Posterior vena cava (tissue), 2 donors: ENCODE measurements at regions of chr17 and their contacts with region 1.

Region 1: DNA sequence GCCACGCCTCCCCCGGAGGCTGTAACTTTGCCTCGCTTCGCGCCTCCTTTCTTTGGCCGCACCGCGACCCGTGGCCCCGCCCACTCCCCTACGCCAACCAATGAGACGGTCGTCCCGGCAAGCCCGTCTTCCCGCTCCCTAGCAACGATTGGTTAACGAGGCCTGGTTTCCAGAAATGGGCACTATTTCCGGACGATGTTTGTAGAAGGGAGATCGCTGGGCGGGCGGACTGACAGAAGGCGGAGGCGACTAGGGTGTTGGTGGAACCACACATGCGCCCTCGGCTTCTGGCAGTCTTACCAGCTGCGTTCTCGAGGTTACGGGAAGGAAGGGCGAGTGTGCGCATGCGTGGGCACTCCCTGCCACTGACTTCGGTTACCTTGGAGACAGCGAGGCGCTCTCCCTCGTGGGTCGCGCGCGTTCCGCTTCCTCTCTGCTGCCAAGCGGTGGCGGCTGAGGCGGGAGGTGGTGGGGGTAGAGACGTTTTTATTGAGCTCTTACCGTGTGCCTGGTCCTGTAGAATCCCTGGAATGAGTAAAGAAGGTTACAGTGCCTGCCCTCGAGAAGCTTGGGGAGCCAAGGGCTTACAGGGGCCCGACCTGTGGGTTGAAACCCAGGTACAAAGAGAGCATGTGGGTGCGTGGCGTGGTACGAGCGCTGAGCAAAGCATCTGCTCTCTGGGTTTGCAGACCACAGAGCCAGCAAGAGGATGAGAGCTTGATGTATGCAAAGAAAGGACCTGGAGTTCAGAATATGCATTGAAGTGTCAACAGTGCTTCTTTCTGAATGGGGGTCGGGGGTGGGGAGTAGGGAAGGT is 500 bp upstream of the MAP3K14 start:
- DNase-seq: peak; percentile 100

Region 2: DNA sequence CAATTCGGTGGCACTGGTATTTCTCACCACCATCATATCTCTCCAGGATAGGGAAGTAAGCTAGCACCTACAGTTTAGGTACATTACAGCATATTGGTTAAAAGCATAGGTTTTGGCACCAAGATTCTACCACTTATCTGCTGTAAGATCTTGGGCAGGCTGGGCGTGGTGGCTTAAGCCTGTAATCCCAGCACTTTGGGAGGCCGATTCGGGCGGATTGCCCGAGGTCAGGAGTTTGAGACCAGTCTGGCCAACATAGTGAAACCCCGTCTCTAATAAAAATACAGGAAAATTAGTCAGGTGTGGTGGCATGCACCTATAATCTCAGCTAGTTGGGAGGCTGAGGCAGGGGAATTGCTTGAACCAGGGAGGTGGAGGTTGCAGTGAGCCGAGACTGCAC is 865.5 kb before region 1 on chr17:
- intact Hi-C with region 1: loop called in 1 of 2 experiments (anchors 5 kb)
- DNase-seq: no peak

Region 3: GRCh38 chr17:45148183-45149036 is 168.9 kb before region 1 on chr17 and contains the start of gene HEXIM1:
- intact Hi-C with region 1: loop called in 1 of 2 experiments (anchors 5 kb)
- DNase-seq: peak; percentile 100
- total RNA-seq, gene HEXIM1: 40.6 to 46.9 TPM

Region 4: GRCh38 chr17:45371414-45372327 is 54.4 kb after region 1 on chr17:
- intact Hi-C with region 1: loop called in 1 of 2 experiments (anchors 10 kb)
- DNase-seq: peak; percentile 95